ENCODE measurements at regions of chr17 and their contacts with region 1.

Region 1: DNA sequence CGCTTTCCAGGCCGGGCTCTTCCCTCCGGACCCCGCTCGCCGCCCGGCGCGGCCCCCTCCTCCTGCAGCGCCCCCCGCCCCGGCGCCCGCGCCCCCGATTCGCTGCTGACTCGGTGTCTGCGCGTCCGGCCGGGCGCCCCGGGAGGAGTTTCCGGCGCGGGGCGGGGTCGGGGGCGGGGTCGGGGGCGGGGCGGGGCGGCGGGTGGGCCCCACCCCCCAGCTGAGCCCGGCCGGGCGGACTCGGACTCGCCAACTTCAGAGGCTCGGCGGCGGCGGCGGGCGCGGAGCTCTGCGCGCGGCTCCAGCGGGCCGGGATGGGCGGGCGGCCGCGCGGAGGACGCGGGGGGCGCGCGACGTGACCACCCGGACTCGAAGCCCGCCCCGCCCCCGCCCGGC is at the start of gene METRNL:
- DNase-seq: peak; percentile 82
- ATAC-seq: peak; percentile 21
- H3K4me3 Mint-ChIP-seq: peak within 1 kb of the TSS; percentile 41
- H3K27ac Mint-ChIP-seq: no peak within 1 kb of the TSS
- H3K4me1 Mint-ChIP-seq: peaks cover 26% of the 10 kb centered on the region
- H3K27me3 Mint-ChIP-seq: peaks cover 7% of the 10 kb centered on the region
- total RNA-seq, gene METRNL: 22.4 to 26.3 TPM

Region 2: DNA sequence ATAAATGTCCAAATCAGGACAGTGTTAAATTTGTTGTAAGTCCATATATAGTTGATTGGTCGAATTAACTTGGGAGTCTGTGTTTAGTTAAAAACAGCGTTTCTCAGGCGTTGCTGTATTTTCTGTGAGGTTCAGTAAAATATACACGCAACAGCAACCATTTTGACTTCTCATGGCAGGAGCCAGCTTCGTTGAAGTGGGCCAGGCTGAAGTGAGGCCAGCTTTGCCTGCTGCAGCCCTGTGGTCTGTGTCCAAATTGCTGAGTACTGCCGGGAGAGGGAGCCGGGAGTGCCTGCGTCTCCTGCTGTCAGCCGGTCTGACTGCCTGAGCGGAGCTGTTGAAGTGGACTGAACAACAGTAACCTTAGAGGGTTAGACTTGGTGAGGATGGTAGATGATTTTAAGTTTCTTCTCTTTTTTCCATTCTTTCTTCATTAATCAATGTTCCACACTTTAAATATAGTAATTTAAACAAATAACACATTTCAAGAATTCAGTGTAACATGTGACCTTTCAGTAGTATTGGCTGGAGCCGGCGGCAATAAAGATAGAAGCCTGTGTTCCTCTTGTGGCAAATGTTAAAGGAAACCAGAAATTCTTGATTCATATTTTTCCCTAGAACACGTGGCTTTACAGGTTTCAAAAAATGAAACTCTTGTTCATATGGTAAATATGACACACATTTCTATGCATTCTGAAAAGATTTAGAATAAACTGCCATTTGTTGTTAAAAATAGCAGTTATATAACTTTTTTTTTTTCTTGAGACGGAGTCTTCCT is 202.6 kb before region 1 on chr17:
- CTCF ChIA-PET with region 1: no interaction called
- POLR2A ChIA-PET with region 1: no interaction called
- intact Hi-C with region 1: loop called in 1 of 2 experiments (anchors 5 kb)
- DNase-seq: peak; percentile 34
- ATAC-seq: peak; percentile 81
- H3K4me3 Mint-ChIP-seq: no peak overlapping the region
- H3K27ac Mint-ChIP-seq: peak overlapping the region; percentile 60
- H3K4me1 Mint-ChIP-seq: peaks cover 48% of the 10 kb centered on the region
- H3K27me3 Mint-ChIP-seq: no peaks in the 10 kb centered on the region

Region 3: DNA sequence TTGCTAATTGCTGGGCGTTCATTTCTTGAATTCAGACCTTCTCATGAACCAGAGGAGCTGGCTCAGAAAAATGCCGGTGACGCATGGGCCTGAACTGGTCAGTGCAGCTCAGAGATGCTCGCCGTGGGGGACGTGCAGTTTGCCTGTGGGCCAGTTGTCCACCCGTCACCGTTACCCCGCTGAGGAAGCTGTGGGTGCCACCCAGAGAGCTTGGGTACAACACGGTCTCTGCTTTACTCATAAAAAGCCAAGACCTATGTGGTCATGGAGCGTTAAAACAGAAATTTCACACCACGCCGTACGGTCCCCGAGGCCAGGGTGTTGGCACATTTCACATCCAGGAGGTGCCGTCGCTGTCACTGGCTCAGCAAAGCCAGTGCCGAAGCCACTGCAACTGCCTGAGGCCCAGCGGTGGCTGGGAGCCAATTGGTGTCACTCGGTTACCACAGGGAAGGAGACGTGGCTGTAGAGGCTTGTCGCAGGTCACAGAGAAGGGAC is 120.9 kb after region 1 on chr17:
- CTCF ChIA-PET with region 1: interaction called, 3 read pairs
- POLR2A ChIA-PET with region 1: no interaction called
- intact Hi-C with region 1: loop called in 1 of 2 experiments (anchors 1 kb)
- DNase-seq: peak; percentile 85
- ATAC-seq: peak; percentile 75
- H3K4me3 Mint-ChIP-seq: peak overlapping the region; percentile 43
- H3K27ac Mint-ChIP-seq: peak overlapping the region; percentile 92
- H3K4me1 Mint-ChIP-seq: peaks cover 30% of the 10 kb centered on the region
- H3K27me3 Mint-ChIP-seq: peaks cover 4% of the 10 kb centered on the region